Activated CD4-positive, alpha-beta T cell treated with anti-CD3 and anti-CD28 coated beads, Interleukin-2, amount 10 ng/mL, durations not matched to agents 24 days and 14 days (primary cell): ENCODE measurements at regions of chr1 and their contacts with region 1.

Region 1: DNA sequence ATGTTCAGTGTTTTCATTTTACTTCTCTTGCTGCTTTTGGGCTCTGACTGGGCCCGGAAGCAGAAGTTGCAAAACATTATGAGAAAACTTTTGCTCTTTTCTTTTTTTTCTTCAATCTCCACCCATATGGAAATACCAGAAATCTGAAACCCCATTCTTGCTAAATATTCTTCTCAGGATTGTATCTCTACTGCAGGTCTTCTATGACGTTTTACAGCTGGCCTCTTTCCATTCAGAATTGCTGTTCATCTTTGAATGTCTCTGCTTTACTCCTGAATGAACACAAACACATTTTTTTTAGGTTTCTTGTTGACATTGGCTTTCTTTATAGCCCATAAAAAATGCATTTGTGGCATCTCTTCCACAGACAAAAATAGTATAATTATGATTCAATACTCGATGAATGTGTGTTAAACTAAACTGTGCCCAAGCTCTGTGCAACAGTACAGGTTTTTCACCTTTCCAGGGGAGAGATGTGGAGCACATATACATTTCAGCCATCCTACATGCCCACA is 18.8 kb downstream of the PTPRC start:
- DNase-seq: peak; percentile 77
- H3K4me3 Mint-ChIP-seq: peak overlapping the region; percentile 92
- H3K27ac Mint-ChIP-seq: peak overlapping the region; percentile 86
- H3K4me1 Mint-ChIP-seq: peaks cover 43% of the 10 kb centered on the region
- H3K27me3 Mint-ChIP-seq: no peaks in the 10 kb centered on the region

Region 2: GRCh38 chr1:198669023-198669698 is 11.6 kb after region 1 on chr1:
- intact Hi-C with region 1: loop called (anchors 1 kb)
- DNase-seq: peak; percentile 88
- H3K4me3 Mint-ChIP-seq: peak overlapping the region; percentile 73
- H3K27ac Mint-ChIP-seq: peak overlapping the region; percentile 94
- H3K4me1 Mint-ChIP-seq: peaks cover 79% of the 10 kb centered on the region
- H3K27me3 Mint-ChIP-seq: no peaks in the 10 kb centered on the region